CD4-positive, alpha-beta T cell (primary cell): ENCODE measurements at regions of chr19 and their contacts with region 1.

Region 1: GRCh38 chr19:19606021-19606420 is 12.5 kb downstream of the PBX4 start:
- DNase-seq: peak in 11 of 14 experiments; percentile 42 to 88 (median 64)
- ATAC-seq: peak; percentile 87
- H3K4me3 ChIP-seq: no peak overlapping the region
- H3K4me3 Mint-ChIP-seq: peak overlapping the region; percentile 77
- H3K27ac ChIP-seq: peak overlapping the region; percentile 64 to 66
- H3K27ac Mint-ChIP-seq: peak overlapping the region; percentile 86
- H3K4me1 ChIP-seq: peaks cover 70% of the 10 kb centered on the region
- H3K4me1 Mint-ChIP-seq: peaks cover 65% of the 10 kb centered on the region
- H3K27me3 ChIP-seq: no peaks in the 10 kb centered on the region
- H3K27me3 Mint-ChIP-seq: no peaks in the 10 kb centered on the region
- CTCF ChIP-seq: no peak

Region 2: DNA sequence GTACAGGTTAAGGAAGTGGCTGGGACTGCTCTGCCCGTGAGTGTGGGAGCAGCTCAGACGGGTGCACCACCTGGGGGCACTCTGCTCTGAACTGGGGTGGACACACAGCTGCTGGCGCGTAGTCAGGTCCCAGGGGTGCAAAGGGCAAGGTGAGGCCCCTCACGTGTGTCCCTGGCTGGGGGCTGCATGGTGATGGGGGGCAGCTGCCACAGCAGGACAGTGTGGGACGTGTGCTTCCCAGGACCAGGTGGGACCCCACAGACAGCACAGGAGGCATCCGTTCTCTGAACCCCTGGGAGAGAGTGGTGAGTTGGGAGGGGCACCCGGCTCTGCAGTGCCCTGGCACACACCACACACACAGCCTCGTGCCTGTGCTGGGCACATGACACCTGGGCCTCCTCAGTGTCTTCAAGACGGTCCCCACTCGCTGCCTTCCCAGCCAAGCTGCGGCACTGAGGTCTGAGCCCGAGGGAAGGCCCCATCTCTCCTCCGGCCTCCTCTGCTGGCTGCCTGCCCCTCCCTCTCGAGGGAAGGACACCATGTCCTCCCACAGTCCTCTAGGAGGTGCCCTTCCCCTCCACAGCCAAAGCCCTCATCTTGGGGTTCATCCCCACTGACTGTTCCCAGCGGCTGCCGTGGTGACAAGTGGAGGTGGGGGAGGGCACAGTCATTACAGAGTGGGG is 43.2 kb before region 1 on chr19:
- CTCF ChIA-PET with region 1: interaction called, 3 read pairs
- POLR2A ChIA-PET with region 1: interaction called, 5 read pairs
- intact Hi-C with region 1: loop called in 1 of 2 experiments (anchors 5 kb)
- DNase-seq: peak in 10 of 14 experiments; percentile 27 to 74 (median 45)
- ATAC-seq: peak; percentile 72
- H3K4me3 ChIP-seq: no peak overlapping the region
- H3K4me3 Mint-ChIP-seq: no peak overlapping the region
- H3K27ac ChIP-seq: no peak overlapping the region
- H3K27ac Mint-ChIP-seq: no peak overlapping the region
- H3K4me1 ChIP-seq: peaks cover 19% of the 10 kb centered on the region
- H3K4me1 Mint-ChIP-seq: peaks cover 33% of the 10 kb centered on the region
- H3K27me3 ChIP-seq: no peaks in the 10 kb centered on the region
- H3K27me3 Mint-ChIP-seq: no peaks in the 10 kb centered on the region
- CTCF ChIP-seq: peak; percentile 36

Region 3: DNA sequence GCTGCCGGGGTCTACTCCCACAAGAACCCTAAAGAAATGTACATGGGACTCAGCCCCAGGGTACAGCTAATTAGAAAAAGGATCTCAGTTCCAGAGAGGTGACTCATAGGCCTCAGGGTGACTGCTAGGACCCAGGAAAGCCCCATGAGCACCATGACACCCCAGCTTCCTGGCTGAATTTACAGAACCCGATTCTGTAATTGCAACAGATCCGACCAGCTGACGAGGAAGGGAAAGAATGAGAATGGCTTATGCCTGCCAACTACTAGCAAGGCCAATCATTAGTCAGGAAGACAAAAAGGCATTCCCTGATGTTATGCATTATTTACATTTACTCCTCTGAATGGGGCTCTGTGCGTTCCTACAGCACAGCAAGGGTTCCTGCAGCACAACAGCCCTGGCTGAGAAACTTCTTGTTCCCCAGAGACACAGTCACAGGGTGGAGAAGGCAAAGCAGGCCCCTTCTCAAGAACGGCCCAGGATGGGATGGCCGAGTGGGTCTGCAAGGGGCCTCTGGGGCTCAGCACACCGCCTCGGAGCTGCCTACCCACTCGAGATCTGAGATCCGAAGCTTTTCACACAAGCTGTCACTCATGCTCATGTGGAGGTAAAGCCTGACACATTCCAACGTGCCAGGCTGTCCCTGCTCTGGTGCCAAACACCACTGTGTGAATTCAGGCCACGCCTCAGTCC is 14.7 kb before region 1 on chr19:
- CTCF ChIA-PET with region 1: interaction called, 12 read pairs
- POLR2A ChIA-PET with region 1: interaction called, 4 read pairs
- intact Hi-C with region 1: loop called in 1 of 2 experiments (anchors 2 kb)
- DNase-seq: peak in 13 of 14 experiments; percentile 27 to 92 (median 49)
- ATAC-seq: peak; percentile 91
- H3K4me3 ChIP-seq: no peak overlapping the region
- H3K4me3 Mint-ChIP-seq: peak overlapping the region; percentile 60
- H3K27ac ChIP-seq: peak overlapping the region; percentile 55 to 79
- H3K27ac Mint-ChIP-seq: peak overlapping the region; percentile 92
- H3K4me1 ChIP-seq: peaks cover 78% of the 10 kb centered on the region
- H3K4me1 Mint-ChIP-seq: peaks cover 47% of the 10 kb centered on the region
- H3K27me3 ChIP-seq: no peaks in the 10 kb centered on the region
- H3K27me3 Mint-ChIP-seq: no peaks in the 10 kb centered on the region
- CTCF ChIP-seq: no peak

Region 4: GRCh38 chr19:19627621-19628500 is 21.8 kb after region 1 on chr19 and contains the start of gene LPAR2:
- CTCF ChIA-PET with region 1: interaction called, 6 read pairs
- POLR2A ChIA-PET with region 1: interaction called, 17 read pairs
- intact Hi-C with region 1: no loop called
- DNase-seq: peak; percentile 65 to 91 (median 80)
- ATAC-seq: peak; percentile 83
- H3K4me3 ChIP-seq: peak within 1 kb of the TSS; percentile 84
- H3K4me3 Mint-ChIP-seq: peak within 1 kb of the TSS; percentile 99
- H3K27ac ChIP-seq: peak within 1 kb of the TSS; percentile 52 to 84
- H3K27ac Mint-ChIP-seq: peak within 1 kb of the TSS; percentile 91
- H3K4me1 ChIP-seq: peaks cover 37% of the 10 kb centered on the region
- H3K4me1 Mint-ChIP-seq: peaks cover 28% of the 10 kb centered on the region
- H3K27me3 ChIP-seq: no peaks in the 10 kb centered on the region
- H3K27me3 Mint-ChIP-seq: no peaks in the 10 kb centered on the region
- CTCF ChIP-seq: no peak
- total RNA-seq, gene LPAR2: 85.9 to 93.7 TPM